ENCODE measurements at regions of chr6 and their contacts with region 1.

Region 1: GRCh38 chr6:3239110-3239830 is 11.8 kb upstream of the TUBB2B start:
- DNase-seq: peak; percentile 49
- ATAC-seq: peak; percentile 91
- H3K4me3 Mint-ChIP-seq: no peak overlapping the region
- H3K27ac Mint-ChIP-seq: no peak overlapping the region
- H3K4me1 Mint-ChIP-seq: peaks cover 16% of the 10 kb centered on the region
- H3K27me3 Mint-ChIP-seq: peaks cover 3% of the 10 kb centered on the region; the same call in 1 of the 2 replicates
- CTCF ChIP-seq: no peak

Region 2: DNA sequence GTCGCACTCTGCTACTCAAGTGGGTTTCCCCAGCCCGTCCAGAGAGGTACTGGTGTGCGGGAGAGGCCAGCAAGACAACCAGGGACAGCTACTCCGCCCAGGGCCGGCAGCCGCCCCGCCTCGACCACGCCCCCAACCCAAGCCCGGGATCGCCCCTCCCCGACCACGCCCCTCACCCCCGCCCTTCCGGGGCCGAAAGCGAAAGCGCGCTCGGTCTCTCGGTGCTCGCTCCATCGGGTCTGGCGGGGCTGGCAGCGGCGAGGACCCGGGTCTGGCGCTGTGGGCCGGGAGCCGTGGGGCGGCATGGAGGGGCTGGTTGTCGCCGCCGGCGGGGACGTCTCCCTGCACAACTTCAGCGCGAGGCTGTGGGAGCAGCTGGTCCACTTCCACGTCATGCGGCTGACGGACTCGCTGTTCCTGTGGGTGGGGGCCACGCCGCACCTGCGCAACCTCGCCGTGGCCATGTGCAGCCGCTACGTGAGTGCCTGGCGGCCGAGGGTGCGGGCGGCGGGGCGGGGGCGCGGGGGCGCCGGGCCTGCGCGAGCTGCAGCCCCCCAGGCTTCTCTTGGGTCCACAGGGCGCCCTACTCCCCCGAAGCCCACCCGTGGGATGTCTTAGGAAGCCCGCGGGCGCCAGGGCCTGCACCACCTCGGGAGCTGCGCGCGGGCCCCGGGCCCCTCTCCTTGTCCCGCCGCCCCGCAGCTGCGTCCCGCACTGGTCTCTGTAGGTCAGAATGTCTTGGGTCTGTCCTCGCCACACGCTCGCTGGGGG is 19.6 kb after region 1 on chr6 and contains the start of gene PSMG4:
- CTCF ChIA-PET with region 1: interaction called, 12 read pairs
- POLR2A ChIA-PET with region 1: no interaction called
- DNase-seq: peak; percentile 97
- ATAC-seq: peak; percentile 89
- H3K4me3 Mint-ChIP-seq: peak within 1 kb of the TSS; percentile 98
- H3K27ac Mint-ChIP-seq: peak within 1 kb of the TSS; percentile 93
- H3K4me1 Mint-ChIP-seq: peaks cover 30% of the 10 kb centered on the region
- H3K27me3 Mint-ChIP-seq: peaks cover 4% of the 10 kb centered on the region
- CTCF ChIP-seq: no peak
- total RNA-seq, gene PSMG4: 30.2 to 38.2 TPM (median 32.5 TPM) in 3 replicates

Measured in WTC11 (cell line).